Psoas muscle (tissue), 8 donors: ENCODE measurements at regions of chr11 and their contacts with region 1.

Region 1: GRCh38 chr11:120952461-120953434 is 71.2 kb upstream of the TBCEL start:
- DNase-seq: peak; percentile 72 to 83
- ATAC-seq: peak; percentile 82 to 96 (median 91)
- H3K4me3 ChIP-seq: peak overlapping the region; percentile 30
- H3K27ac ChIP-seq: no peak overlapping the region
- H3K4me1 ChIP-seq: no peaks in the 10 kb centered on the region
- H3K27me3 ChIP-seq: peaks cover 0 to 38% (median 2%) of the 10 kb centered on the region in 3 donors
- CTCF ChIP-seq: peak; percentile 43

Region 2: GRCh38 chr11:120682866-120683265 is 269.9 kb before region 1 on chr11:
- intact Hi-C with region 1: loop called in 1 of 2 experiments (anchors 10 kb)
- DNase-seq: no peak
- ATAC-seq: no peak
- H3K4me3 ChIP-seq: no peak overlapping the region
- H3K27ac ChIP-seq: no peak overlapping the region
- H3K4me1 ChIP-seq: no peaks in the 10 kb centered on the region
- H3K27me3 ChIP-seq: peaks cover 0 to 27% (median 3%) of the 10 kb centered on the region in 3 donors
- CTCF ChIP-seq: no peak